Activated naive CD4-positive, alpha-beta T cell treated with anti-CD3 and anti-CD28 coated beads for 36 hours (primary cell): ENCODE measurements at regions of chr9 and their contacts with region 1.

Region 1: DNA sequence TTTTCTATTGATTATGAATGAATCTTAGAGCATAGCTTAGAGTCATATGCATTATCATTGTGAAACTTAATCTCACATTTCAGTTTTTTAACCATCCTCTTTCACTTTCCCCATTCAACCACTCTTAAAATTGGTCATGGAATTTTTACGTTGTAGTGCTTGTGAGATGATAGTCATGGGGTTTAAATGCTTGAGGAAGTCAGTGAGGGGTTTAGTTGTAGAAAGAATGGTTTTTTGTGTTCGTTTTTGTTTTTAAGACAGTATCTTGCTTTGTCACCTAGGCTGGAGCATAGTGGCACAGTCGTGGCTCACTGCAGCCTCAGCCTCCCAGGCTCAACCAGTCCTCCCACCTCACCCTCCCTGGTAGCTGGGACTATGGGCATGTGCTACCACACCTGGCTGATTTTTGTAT is 19.6 kb downstream of the UGCG start:
- DNase-seq: peak; percentile 45
- H3K4me3 Mint-ChIP-seq: no peak overlapping the region
- H3K27ac Mint-ChIP-seq: peak overlapping the region; percentile 81
- H3K4me1 Mint-ChIP-seq: peaks cover 53% of the 10 kb centered on the region
- H3K27me3 Mint-ChIP-seq: no peaks in the 10 kb centered on the region

Region 2: GRCh38 chr9:111542497-111543254 is 373.6 kb before region 1 on chr9:
- CTCF ChIA-PET with region 1: no interaction called
- intact Hi-C with region 1: no loop called
- DNase-seq: no peak
- H3K4me3 Mint-ChIP-seq: no peak overlapping the region
- H3K27ac Mint-ChIP-seq: no peak overlapping the region
- H3K4me1 Mint-ChIP-seq: no peaks in the 10 kb centered on the region
- H3K27me3 Mint-ChIP-seq: no peaks in the 10 kb centered on the region

Region 3: GRCh38 chr9:111805830-111806241 is 110.4 kb before region 1 on chr9:
- CTCF ChIA-PET with region 1: interaction called, 4 read pairs
- intact Hi-C with region 1: loop called (anchors 2 kb)
- DNase-seq: no peak
- H3K4me3 Mint-ChIP-seq: no peak overlapping the region
- H3K27ac Mint-ChIP-seq: no peak overlapping the region
- H3K4me1 Mint-ChIP-seq: peaks cover 32% of the 10 kb centered on the region
- H3K27me3 Mint-ChIP-seq: no peaks in the 10 kb centered on the region

Region 4: GRCh38 chr9:111937781-111938426 is 21.7 kb after region 1 on chr9:
- CTCF ChIA-PET with region 1: no interaction called
- intact Hi-C with region 1: loop called (anchors 1 kb)
- DNase-seq: peak; percentile 87
- H3K4me3 Mint-ChIP-seq: peak overlapping the region; percentile 32
- H3K27ac Mint-ChIP-seq: peak overlapping the region; percentile 86
- H3K4me1 Mint-ChIP-seq: peaks cover 23% of the 10 kb centered on the region
- H3K27me3 Mint-ChIP-seq: no peaks in the 10 kb centered on the region

Region 5: DNA sequence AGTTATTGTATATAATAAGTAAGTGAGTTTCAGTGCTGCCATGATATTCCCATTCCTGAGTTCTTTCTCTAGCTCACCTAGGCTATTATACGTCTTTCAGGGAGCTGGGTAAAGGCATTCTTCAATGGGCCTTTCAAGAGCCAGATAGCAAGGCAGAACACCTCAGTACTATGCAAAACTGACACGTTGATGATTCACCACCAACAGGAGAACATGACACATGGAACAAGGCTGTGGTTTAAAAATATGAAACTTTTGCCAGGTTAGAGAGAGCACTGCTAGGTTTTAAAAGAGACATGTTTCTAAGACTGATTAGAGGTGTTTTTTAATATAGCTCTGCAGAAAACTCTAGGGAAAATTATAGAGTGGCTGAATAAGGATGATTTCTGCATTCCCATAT is 76.3 kb after region 1 on chr9:
- CTCF ChIA-PET with region 1: interaction called, 3 read pairs
- intact Hi-C with region 1: loop called (anchors 1 kb)
- DNase-seq: peak; percentile 61
- H3K4me3 Mint-ChIP-seq: no peak overlapping the region
- H3K27ac Mint-ChIP-seq: no peak overlapping the region
- H3K4me1 Mint-ChIP-seq: peaks cover 31% of the 10 kb centered on the region
- H3K27me3 Mint-ChIP-seq: no peaks in the 10 kb centered on the region

Region 6: DNA sequence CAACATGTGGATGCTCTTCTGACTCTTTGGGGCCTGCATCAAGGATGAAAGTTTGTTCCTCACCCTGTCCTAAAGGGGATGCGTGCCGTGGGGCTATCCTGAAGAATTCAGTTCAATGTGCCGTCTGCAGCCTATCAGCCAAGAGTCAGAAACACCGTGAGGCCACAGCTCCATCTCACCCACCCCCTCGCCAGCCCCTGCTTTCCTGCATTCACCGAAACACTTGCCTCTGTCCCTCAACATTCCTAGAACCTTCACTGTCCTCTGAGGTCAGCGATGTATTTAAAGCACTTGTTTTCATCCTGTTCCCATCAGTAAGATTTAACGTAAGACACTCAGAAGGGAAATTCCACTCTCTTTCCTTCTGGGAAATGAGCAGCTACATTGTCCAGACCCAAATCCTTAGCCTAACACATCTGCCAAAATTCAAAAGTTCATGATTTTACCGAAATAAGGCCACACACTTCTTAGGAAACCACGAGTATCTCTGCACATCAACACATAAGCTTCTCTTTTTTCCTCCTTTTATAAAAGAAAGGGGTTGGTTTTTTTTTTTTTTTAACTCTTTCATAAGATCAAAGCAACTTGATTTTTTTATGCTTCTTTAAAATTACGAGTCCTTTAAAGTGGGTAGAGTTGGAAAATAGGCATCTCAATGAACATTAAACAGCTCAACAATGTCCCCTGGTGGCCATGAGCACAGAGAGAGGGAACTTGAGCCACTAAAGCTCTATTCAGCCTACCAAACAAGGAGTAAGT is 158.2 kb after region 1 on chr9:
- CTCF ChIA-PET with region 1: interaction called, 3 read pairs
- intact Hi-C with region 1: loop called (anchors 1 kb)
- DNase-seq: peak; percentile 85
- H3K4me3 Mint-ChIP-seq: no peak overlapping the region
- H3K27ac Mint-ChIP-seq: no peak overlapping the region
- H3K4me1 Mint-ChIP-seq: peaks cover 28% of the 10 kb centered on the region
- H3K27me3 Mint-ChIP-seq: no peaks in the 10 kb centered on the region